ENCODE measurements at regions of chr5 and their contacts with region 1.

Region 1: DNA sequence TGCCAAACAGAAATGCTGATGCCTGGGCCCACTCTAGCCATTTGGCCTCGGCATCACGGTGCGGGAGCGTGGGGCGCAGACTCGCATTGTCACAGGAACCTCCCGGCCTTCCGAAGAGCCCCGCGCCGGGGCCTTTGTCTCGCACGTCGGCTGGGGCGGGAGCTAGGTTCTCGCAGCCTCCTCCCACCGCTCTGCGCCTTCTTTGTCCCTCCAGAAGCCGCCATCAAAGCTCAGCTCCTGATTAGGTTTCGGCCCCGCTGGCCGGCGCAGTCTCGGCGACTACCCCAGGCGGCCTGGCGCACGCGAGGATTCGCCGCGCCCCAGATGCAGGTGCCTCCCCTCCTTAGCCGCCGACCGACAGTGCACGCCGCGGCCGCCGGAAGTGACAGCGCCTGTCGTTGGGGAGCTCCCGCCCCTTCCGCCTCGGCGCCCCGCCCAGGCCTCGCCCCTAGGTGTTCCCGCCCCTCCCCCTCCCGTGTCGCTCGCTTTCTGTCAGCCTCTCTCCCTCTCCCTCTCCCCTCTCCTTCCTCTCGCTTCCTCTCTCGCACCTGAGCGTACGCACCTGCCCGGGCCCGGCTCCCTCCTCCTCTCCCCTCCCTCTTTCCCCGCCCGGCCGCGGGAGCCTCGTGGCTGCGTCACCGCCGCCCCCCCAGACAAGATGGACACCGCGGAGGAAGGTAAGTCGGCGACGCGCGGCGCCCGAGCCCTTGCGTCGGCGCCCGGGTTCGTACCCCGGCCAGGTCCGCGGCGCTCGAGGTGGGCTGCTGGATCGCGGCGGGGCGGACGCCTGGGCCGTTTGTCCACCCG is at the start of gene MARCHF6:
- DNase-seq: peak; percentile 86 to 92
- H3K4me3 ChIP-seq: peak within 1 kb of the TSS; percentile 88 to 89 (median 89)
- H3K27ac ChIP-seq: peak within 1 kb of the TSS; percentile 90
- H3K4me1 ChIP-seq: peaks cover 2 to 11% (median 6%) of the 10 kb centered on the region in 4 experiments; a peak in 6 of 7 replicates
- H3K27me3 ChIP-seq: peaks cover 0 to 6% (median under 1%) of the 10 kb centered on the region in 4 experiments; a peak in 1 of 7 replicates
- CTCF ChIP-seq: no peak
- EP300 ChIP-seq: peak in 1 of 2 experiments; percentile 77; a peak in 1 of 3 replicates
- POLR2A ChIP-seq: peak; percentile 84 to 89
- RAD21 ChIP-seq: no peak
- total RNA-seq, gene MARCHF6: 109 and 118 TPM in 2 replicates

Region 2: DNA sequence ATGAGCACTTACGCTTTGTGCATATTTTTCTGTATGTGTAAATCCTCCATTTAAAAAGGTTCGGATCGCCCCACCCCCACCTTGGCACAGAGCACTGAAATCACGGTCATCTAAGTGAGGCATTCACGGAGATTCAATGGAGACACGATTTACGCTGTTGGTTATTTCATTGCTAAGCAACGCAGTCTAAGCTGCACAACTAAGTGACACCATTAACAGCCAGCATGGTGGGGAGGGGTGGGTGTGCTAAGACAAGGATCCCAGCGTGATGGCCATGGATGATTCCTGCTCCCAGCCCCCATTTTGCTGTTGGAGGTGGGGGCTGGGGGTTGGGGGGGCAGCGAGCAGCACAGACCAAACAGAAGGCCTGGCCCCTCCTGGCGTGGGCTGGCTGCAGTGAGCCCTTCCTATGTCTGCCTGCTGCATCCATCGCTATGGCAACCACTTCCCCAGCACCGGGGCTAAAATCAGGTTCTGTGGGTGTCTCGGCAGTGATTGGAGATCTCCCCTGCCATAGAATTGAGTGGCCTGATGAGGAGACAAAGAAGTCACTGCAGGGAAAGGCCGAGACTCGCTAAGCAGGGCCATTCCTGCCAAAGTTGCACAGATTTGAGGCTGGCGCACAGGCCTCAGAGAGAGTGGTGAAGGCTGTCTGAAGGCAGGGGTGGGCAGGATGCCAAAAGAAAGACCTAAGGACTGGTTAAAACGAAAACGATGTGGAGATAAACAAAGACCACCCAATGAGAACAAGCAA is 14.2 kb before region 1 on chr5:
- CTCF ChIA-PET with region 1: interaction called, 4 read pairs
- POLR2A ChIA-PET with region 1: interaction called, 10 read pairs
- DNase-seq: no peak
- H3K4me3 ChIP-seq: no peak overlapping the region
- H3K27ac ChIP-seq: no peak overlapping the region
- H3K4me1 ChIP-seq: peaks cover 0 to 14% (median 5%) of the 10 kb centered on the region in 4 experiments; a peak in 4 of 7 replicates
- H3K27me3 ChIP-seq: peaks cover 7 to 10% (median 8%) of the 10 kb centered on the region in 4 experiments
- CTCF ChIP-seq: no peak
- EP300 ChIP-seq: no peak
- POLR2A ChIP-seq: no peak
- RAD21 ChIP-seq: no peak

Region 3: DNA sequence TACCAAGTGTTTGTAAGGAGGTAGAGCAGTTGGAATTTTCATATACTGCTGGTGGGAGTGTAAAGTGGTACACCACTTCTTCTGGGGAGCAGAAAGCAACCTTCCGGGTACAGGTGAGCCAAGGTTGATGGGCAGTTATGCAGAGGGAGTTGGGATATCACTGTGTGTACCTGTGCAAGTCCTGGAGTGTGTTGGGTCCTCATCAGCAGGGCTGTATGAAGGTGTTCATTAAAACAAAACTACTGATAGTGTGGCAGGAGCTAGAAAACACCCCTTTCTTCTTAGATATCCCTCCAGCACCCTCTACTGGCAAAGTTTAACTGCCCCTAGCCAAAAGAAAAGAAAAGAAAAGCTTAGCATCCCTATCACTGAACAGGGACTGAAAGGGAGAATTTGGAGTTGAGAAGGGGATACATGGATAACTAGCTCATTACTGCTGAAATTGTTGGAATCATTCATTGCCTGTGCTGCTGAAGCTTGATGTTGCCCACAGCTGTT is 10.8 kb after region 1 on chr5:
- CTCF ChIA-PET with region 1: interaction called, 28 read pairs
- POLR2A ChIA-PET with region 1: interaction called, 15 read pairs
- DNase-seq: no peak
- H3K4me3 ChIP-seq: no peak overlapping the region
- H3K27ac ChIP-seq: no peak overlapping the region
- H3K4me1 ChIP-seq: no peaks in the 10 kb centered on the region
- H3K27me3 ChIP-seq: no peaks in the 10 kb centered on the region
- CTCF ChIP-seq: peak in 2 of 3 experiments; percentile 37 to 48; a peak in 3 of 4 replicates
- EP300 ChIP-seq: no peak
- POLR2A ChIP-seq: no peak
- RAD21 ChIP-seq: peak; percentile 41 to 60

Measured in H1 (cell line).